AG04449 (cell line): ENCODE measurements at regions of chr16 and their contacts with region 1.

Region 1: GRCh38 chr16:46555951-46556350 is 65.2 kb downstream of the SHCBP1 start:
- DNase-seq: no peak
- H3K4me3 ChIP-seq: no peak overlapping the region
- CTCF ChIP-seq: no peak

Region 2: DNA sequence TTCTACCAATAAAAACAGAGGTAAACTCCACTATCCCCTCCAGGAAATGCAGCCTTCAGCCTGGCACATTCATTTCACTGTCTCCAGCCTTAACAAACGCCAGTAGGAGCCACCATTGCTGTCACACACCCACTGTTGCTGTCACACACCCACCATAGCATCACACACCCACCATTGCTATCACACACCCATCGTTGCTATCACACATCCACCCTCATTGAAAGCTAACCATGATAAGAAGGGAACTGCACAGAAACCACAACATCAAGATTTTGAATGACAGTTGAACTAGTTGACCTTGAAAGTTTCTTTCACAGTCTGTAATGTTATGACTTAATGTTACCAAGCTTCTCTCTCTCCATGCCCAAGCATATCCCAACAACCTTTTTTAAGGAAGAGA is 27.1 kb after region 1 on chr16:
- CTCF ChIA-PET with region 1: interaction called, 56 read pairs
- POLR2A ChIA-PET with region 1: no interaction called
- DNase-seq: no peak
- H3K4me3 ChIP-seq: no peak overlapping the region
- CTCF ChIP-seq: no peak

Region 3: GRCh38 chr16:46591257-46591656 is 35.3 kb after region 1 on chr16:
- CTCF ChIA-PET with region 1: interaction called, 16 read pairs
- POLR2A ChIA-PET with region 1: no interaction called
- DNase-seq: no peak
- H3K4me3 ChIP-seq: no peak overlapping the region
- CTCF ChIP-seq: no peak

Region 4: DNA sequence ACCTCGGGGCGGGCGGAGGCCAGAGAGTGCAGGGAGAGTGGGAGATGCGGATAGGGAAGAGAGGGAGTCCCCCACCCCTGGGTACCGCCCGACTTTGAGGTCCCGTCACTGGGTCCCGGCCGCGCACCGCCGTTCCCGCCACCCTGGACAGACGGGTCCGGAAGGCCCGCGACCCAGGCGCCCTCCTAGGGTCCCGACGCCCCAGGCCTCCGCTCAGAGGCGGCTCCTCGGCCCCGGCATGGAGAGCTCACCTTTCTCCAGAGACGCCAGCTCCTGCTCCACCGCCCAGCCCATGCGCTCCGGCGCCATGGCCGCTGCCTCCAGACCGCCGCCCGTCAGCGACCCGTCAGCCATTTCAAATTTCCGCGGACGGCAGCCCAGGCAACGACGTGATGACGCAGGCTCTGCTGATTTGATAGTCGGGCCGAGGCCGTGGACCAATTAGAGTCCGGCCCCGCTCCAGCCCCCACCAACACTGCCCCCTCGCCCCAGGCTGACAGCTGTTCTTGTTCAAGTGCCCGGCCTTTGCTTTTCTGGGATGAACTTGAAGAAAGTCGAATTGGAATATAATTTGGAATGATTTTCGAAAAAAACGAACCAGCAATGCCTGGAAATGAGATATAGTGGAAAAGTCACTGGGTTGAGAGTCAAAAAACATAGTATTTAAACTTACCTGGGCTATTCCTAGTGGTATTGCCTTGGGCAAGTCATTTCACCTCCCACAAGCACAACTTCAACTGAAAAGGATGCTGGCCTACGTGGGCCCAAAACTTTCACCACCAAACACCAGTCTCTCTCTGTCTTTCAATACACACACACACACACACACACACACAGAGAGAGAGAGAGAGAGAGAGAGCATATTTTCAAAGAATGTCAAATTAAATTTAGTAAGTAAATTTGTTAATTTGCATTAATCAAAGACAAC is 65.3 kb after region 1 on chr16 and contains the start of gene SHCBP1:
- CTCF ChIA-PET with region 1: interaction called, 15 read pairs
- POLR2A ChIA-PET with region 1: no interaction called
- DNase-seq: no peak
- H3K4me3 ChIP-seq: peak within 1 kb of the TSS; percentile 79
- CTCF ChIP-seq: no peak